ENCODE measurements at regions of chr4 and their contacts with region 1.

Region 1: GRCh38 chr4:70734168-70734954 is 12.6 kb downstream of the RUFY3 start:
- DNase-seq: peak; percentile 71 to 92 (median 88)
- H3K4me3 ChIP-seq: peak overlapping the region in 6 of 7 experiments; percentile 47 to 77 (median 60)
- H3K27ac ChIP-seq: peak overlapping the region in 1 of 2 experiments; percentile 58
- H3K4me1 ChIP-seq: peaks cover 22 to 50% (median 39%) of the 10 kb centered on the region in 4 experiments
- H3K27me3 ChIP-seq: no peaks in the 10 kb centered on the region

Region 2: DNA sequence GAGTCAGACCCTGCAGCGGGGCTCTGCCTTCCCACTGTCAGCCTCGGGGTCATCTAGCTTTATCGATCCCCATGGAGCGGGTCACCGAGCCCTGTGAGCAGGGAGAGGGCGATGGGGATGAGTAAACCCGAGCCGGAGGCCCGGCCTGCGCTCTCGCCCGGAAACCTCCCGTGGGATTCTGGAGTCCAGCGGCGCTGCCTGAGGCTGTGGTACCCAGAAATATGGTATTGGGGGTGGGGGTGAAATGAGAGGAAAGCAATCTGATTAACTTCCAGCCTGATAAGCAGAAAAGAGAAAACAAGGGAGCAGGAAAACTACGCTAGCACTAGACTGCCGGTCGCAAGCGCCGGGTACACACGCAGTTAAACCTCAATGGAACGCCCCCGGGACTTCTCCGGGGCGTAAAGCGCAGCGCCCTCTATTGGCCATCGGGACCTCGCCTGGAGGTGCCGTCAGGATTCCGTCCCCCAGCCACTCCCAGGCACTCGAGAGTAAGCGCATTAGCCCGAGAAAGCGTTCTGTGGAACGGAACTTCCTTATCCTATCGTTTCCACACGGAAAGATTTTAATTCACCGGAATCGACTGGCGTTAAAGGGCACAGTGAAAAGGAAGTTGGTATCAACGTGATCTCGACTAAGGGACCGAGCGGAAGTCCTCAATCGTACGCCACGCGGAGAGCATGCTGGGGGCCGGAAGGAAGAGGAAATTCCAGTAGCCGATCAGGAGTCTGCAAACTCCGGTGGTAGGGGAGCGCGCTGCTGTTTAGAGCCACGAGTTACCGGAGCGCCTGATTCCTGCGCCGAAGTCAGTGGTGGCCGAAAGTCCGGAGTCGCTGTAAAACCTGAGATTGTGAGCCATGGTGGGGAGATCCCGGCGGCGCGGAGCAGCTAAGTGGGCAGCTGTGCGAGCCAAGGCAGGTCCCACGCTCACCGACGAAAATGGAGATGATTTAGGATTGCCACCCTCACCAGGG is 46.3 kb before region 1 on chr4 and contains the start of gene UTP3:
- CTCF ChIA-PET with region 1: interaction called, 12 read pairs
- POLR2A ChIA-PET with region 1: interaction called, 3 read pairs
- DNase-seq: peak; percentile 97 to 98 (median 98)
- H3K4me3 ChIP-seq: peak within 1 kb of the TSS; percentile 73 to 100 (median 87)
- H3K27ac ChIP-seq: peak within 1 kb of the TSS; percentile 92 to 94
- H3K4me1 ChIP-seq: peaks cover 8 to 35% (median 25%) of the 10 kb centered on the region in 4 experiments
- H3K27me3 ChIP-seq: no peaks in the 10 kb centered on the region

Region 3: GRCh38 chr4:70704331-70705145 is 29.8 kb before region 1 on chr4:
- CTCF ChIA-PET with region 1: interaction called, 24 read pairs
- POLR2A ChIA-PET with region 1: interaction called, 3 read pairs
- DNase-seq: peak; percentile 70 to 80 (median 79)
- H3K4me3 ChIP-seq: peak overlapping the region; percentile 56 to 94 (median 82)
- H3K27ac ChIP-seq: peak overlapping the region; percentile 59 to 81
- H3K4me1 ChIP-seq: peaks cover 15 to 20% (median 17%) of the 10 kb centered on the region in 4 experiments
- H3K27me3 ChIP-seq: no peaks in the 10 kb centered on the region

Region 4: GRCh38 chr4:70714079-70714887 is 20.1 kb before region 1 on chr4:
- CTCF ChIA-PET with region 1: interaction called, 10 read pairs
- POLR2A ChIA-PET with region 1: no interaction called
- DNase-seq: no peak
- H3K4me3 ChIP-seq: no peak overlapping the region
- H3K27ac ChIP-seq: no peak overlapping the region
- H3K4me1 ChIP-seq: peaks cover 4 to 29% (median 6%) of the 10 kb centered on the region in 4 experiments
- H3K27me3 ChIP-seq: no peaks in the 10 kb centered on the region

Region 5: DNA sequence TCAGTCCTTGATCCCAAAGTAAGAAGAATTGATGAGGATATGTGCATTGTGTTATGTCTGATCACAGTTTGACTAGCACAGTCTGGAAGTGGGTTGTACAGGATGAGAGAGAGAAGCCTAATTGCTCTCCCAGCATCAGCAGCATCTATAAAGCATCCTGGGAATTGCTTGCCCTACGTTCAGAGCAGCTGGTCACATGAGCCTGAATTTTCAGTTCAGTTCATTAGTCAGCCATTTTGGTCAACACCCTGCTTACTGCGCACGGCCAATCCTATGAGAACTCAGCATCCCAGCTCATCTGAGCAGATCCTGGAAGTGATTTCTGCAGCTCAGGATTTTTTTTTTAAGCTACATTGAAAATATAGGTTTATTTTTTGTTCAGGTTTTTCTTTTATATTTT is 12.6 kb before region 1 on chr4 and contains the start of gene RUFY3:
- CTCF ChIA-PET with region 1: interaction called, 10 read pairs
- POLR2A ChIA-PET with region 1: interaction called, 3 read pairs
- DNase-seq: no peak
- H3K4me3 ChIP-seq: no peak within 1 kb of the TSS
- H3K27ac ChIP-seq: no peak within 1 kb of the TSS
- H3K4me1 ChIP-seq: no peaks in the 10 kb centered on the region
- H3K27me3 ChIP-seq: no peaks in the 10 kb centered on the region

Region 6: GRCh38 chr4:70936200-70936787 is 201.9 kb after region 1 on chr4:
- CTCF ChIA-PET with region 1: no interaction called
- POLR2A ChIA-PET with region 1: no interaction called
- DNase-seq: no peak
- H3K4me3 ChIP-seq: no peak overlapping the region
- H3K27ac ChIP-seq: no peak overlapping the region
- H3K4me1 ChIP-seq: peaks cover 0 to 4% (median 4%) of the 10 kb centered on the region in 4 experiments
- H3K27me3 ChIP-seq: no peaks in the 10 kb centered on the region